T-cell (primary cell): ENCODE measurements at regions of chr14 and their contacts with region 1.

Region 1: GRCh38 chr14:31934767-31935266 is 142.3 kb upstream of the ARHGAP5 start:
- DNase-seq: peak in 7 of 35 experiments; percentile 10 to 52 (median 15)
- ATAC-seq: no peak
- H3K4me3 ChIP-seq: no peak overlapping the region
- H3K4me3 Mint-ChIP-seq: no peak overlapping the region
- H3K27ac ChIP-seq: no peak overlapping the region
- H3K27ac Mint-ChIP-seq: no peak overlapping the region
- H3K4me1 ChIP-seq: peaks cover 0 to 2% of the 10 kb centered on the region in 2 experiments
- H3K4me1 Mint-ChIP-seq: peaks cover 0 to 12% (median 11%) of the 10 kb centered on the region in 3 donors
- H3K27me3 ChIP-seq: no peaks in the 10 kb centered on the region
- H3K27me3 Mint-ChIP-seq: peaks cover 0 to 1% of the 10 kb centered on the region in 2 donors

Region 2: DNA sequence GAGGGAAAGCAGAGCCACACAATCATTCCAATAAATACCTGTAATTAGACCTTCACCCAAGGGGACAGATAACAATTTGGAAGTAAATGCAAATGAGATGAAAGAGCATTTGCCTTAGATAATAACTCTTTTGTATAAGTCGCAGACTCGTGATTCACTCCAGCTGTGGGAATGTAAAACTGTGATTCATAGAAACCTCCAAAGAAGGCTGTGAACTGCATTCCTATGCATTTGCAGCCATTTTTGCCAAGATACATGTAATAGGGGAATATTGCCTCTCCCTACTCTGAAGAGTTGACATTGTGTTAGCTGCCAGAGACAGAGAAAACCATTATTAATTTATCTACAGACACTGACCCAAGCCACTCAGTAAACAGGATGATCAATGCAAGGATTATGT is 39.6 kb before region 1 on chr14:
- CTCF ChIA-PET with region 1: no interaction called
- POLR2A ChIA-PET with region 1: no interaction called
- DNase-seq: no peak
- ATAC-seq: no peak
- H3K4me3 ChIP-seq: no peak overlapping the region
- H3K4me3 Mint-ChIP-seq: no peak overlapping the region
- H3K27ac ChIP-seq: no peak overlapping the region
- H3K27ac Mint-ChIP-seq: no peak overlapping the region
- H3K4me1 ChIP-seq: no peaks in the 10 kb centered on the region
- H3K4me1 Mint-ChIP-seq: peaks cover 0 to 3% (median 0%) of the 10 kb centered on the region in 3 donors
- H3K27me3 ChIP-seq: peaks cover 0 to 6% of the 10 kb centered on the region in 2 experiments
- H3K27me3 Mint-ChIP-seq: peaks cover 17 to 18% of the 10 kb centered on the region in 2 donors

Region 3: DNA sequence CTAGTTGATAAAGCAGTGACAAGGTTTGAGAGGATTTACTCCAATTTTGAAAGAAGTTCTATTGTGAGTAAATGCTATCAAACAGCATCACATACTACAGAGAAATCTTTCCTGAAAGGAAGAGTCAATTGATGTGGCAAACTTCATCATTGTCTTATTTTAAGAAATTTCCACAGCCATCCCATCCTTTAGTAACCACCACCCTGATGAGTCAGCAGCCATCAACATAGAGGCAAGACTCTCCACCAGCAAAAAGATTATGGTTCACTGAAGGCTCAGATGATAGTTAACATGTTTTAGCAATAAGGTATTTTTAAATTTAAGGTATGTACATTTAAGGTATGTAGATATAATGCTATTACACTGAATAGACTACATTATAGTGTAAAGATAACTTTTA is 20.2 kb after region 1 on chr14:
- CTCF ChIA-PET with region 1: no interaction called
- POLR2A ChIA-PET with region 1: interaction called in 1 of 2 experiments, 12 read pairs
- DNase-seq: no peak
- ATAC-seq: no peak
- H3K4me3 ChIP-seq: no peak overlapping the region
- H3K4me3 Mint-ChIP-seq: no peak overlapping the region
- H3K27ac ChIP-seq: no peak overlapping the region
- H3K27ac Mint-ChIP-seq: no peak overlapping the region
- H3K4me1 ChIP-seq: no peaks in the 10 kb centered on the region
- H3K4me1 Mint-ChIP-seq: peaks cover 0 to 5% (median 0%) of the 10 kb centered on the region in 3 donors
- H3K27me3 ChIP-seq: no peaks in the 10 kb centered on the region
- H3K27me3 Mint-ChIP-seq: peaks cover 4 to 23% of the 10 kb centered on the region in 2 donors